PC-3 (cell line): ENCODE measurements at regions of chr3 and their contacts with region 1.

Region 1: GRCh38 chr3:180306691-180307090 is 270.0 kb upstream of the PEX5L start:
- DNase-seq: peak; percentile 90
- ATAC-seq: peak; percentile 87
- H3K4me3 ChIP-seq: peak overlapping the region; percentile 48
- H3K27ac ChIP-seq: peak overlapping the region; percentile 47
- H3K4me1 ChIP-seq: peaks cover 40% of the 10 kb centered on the region
- H3K27me3 ChIP-seq: no peaks in the 10 kb centered on the region
- CTCF ChIP-seq: no peak

Region 2: DNA sequence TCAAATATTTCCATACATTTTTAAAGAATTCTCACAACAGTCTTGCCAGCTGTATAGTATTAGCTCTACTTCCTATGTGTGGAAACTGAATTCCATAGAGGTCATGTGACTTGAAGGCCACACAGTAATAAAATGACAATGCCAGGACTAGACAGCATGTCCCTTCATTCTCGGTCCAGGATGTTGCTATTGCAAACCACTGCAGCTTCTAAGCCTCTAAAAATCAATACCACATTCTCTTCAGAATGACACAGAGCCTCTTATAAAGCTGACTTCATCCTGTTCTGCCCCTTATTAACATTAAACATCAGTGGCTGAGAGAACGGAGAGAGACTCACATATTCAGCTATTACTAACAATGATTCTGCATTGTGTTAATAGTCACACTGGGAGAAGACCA is 29.6 kb before region 1 on chr3:
- CTCF ChIA-PET with region 1: no interaction called
- POLR2A ChIA-PET with region 1: interaction called, 6 read pairs
- intact Hi-C with region 1: loop called (anchors 1 kb)
- DNase-seq: peak; percentile 85
- ATAC-seq: peak; percentile 82
- H3K4me3 ChIP-seq: no peak overlapping the region
- H3K27ac ChIP-seq: peak overlapping the region; percentile 62
- H3K4me1 ChIP-seq: peaks cover 54% of the 10 kb centered on the region
- H3K27me3 ChIP-seq: no peaks in the 10 kb centered on the region
- CTCF ChIP-seq: no peak

Region 3: DNA sequence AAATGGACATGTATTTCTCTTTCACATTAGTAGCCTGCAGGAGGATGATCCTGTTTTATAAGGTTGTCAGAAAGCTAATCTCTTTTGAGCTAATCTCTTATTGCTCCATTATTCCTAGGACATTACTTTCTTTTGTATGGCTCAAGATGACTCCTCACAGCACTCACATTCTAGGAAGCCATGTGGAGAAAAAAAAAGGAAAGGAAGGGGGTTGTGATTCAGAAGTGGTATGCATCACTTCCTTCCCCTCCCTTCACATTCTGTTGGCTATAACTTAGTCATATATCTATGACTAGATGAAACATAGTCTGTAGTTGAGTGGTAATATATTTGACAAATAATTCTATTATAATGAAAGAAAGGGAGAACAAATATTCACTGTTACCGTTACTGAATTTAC is 126.5 kb after region 1 on chr3:
- CTCF ChIA-PET with region 1: no interaction called
- POLR2A ChIA-PET with region 1: no interaction called
- intact Hi-C with region 1: no loop called
- DNase-seq: peak; percentile 94
- ATAC-seq: peak; percentile 97
- H3K4me3 ChIP-seq: no peak overlapping the region
- H3K27ac ChIP-seq: peak overlapping the region; percentile 88
- H3K4me1 ChIP-seq: peaks cover 22% of the 10 kb centered on the region
- H3K27me3 ChIP-seq: no peaks in the 10 kb centered on the region
- CTCF ChIP-seq: no peak